ENCODE measurements at regions of chr4 and their contacts with region 1.

Region 1: GRCh38 chr4:40719008-40719623 is 30.6 kb upstream of the NSUN7 start:
- DNase-seq: peak; percentile 73
- ATAC-seq: peak; percentile 94
- H3K4me3 ChIP-seq: no peak overlapping the region
- H3K27ac ChIP-seq: no peak overlapping the region
- H3K4me1 ChIP-seq: peaks cover 15% of the 10 kb centered on the region
- H3K27me3 ChIP-seq: no peaks in the 10 kb centered on the region
- CTCF ChIP-seq: peak; percentile 80

Region 2: GRCh38 chr4:40325189-40326019 is 393.7 kb before region 1 on chr4:
- CTCF ChIA-PET with region 1: interaction called, 4 read pairs
- POLR2A ChIA-PET with region 1: no interaction called
- intact Hi-C with region 1: loop called (anchors 2 kb)
- DNase-seq: peak; percentile 72
- ATAC-seq: peak; percentile 84
- H3K4me3 ChIP-seq: no peak overlapping the region
- H3K27ac ChIP-seq: no peak overlapping the region
- H3K4me1 ChIP-seq: peaks cover 12% of the 10 kb centered on the region
- H3K27me3 ChIP-seq: no peaks in the 10 kb centered on the region
- CTCF ChIP-seq: peak; percentile 84

Region 3: DNA sequence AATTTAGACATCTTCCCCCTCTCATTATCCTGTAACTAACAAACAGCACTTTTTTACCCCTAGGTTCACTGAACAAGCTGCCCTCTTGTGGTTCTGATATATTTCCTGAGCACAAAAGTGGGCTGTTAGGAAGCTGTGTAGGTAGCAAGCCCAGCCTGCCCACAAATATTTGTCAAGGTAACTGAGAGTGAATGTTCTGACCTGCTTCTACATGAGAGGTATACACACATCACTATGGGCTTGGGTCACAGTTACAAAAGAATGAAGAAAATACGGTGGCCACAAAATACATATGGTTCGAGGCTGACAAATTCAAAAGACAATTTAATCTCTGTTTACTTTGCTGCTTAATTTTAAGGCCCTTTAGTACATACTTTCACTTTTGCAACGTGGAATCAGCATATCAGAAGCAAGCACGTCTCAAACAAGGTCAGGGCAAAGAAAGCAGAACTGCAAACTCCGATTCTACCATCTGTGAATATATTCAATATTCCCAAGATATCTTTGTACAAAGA is 168.1 kb before region 1 on chr4:
- CTCF ChIA-PET with region 1: no interaction called
- POLR2A ChIA-PET with region 1: interaction called, 3 read pairs
- intact Hi-C with region 1: loop called (anchors 5 kb)
- DNase-seq: peak; percentile 53
- ATAC-seq: peak; percentile 60
- H3K4me3 ChIP-seq: peak overlapping the region; percentile 35; the same call in 1 of the 2 replicates
- H3K27ac ChIP-seq: peak overlapping the region; percentile 56
- H3K4me1 ChIP-seq: peaks cover 21% of the 10 kb centered on the region
- H3K27me3 ChIP-seq: no peaks in the 10 kb centered on the region
- CTCF ChIP-seq: peak; percentile 59

Region 4: GRCh38 chr4:40629401-40630334 is 89.4 kb before region 1 on chr4 and contains the start of gene RBM47:
- CTCF ChIA-PET with region 1: no interaction called
- POLR2A ChIA-PET with region 1: no interaction called
- intact Hi-C with region 1: loop called (anchors 2 kb)
- DNase-seq: peak; percentile 86
- ATAC-seq: peak; percentile 78
- H3K4me3 ChIP-seq: peak within 1 kb of the TSS; percentile 87
- H3K27ac ChIP-seq: peak within 1 kb of the TSS; percentile 100
- H3K4me1 ChIP-seq: peaks cover 33% of the 10 kb centered on the region
- H3K27me3 ChIP-seq: no peaks in the 10 kb centered on the region
- CTCF ChIP-seq: no peak; the same call in 1 of the 2 replicates
- total RNA-seq, gene RBM47: 34.7 and 47.6 TPM in 2 replicates

Region 5: GRCh38 chr4:40856822-40857362 is 137.8 kb after region 1 on chr4:
- CTCF ChIA-PET with region 1: no interaction called
- POLR2A ChIA-PET with region 1: no interaction called
- intact Hi-C with region 1: no loop called
- DNase-seq: peak; percentile 51
- ATAC-seq: peak; percentile 92
- H3K4me3 ChIP-seq: peak overlapping the region; percentile 60; the same call in 1 of the 2 replicates
- H3K27ac ChIP-seq: no peak overlapping the region
- H3K4me1 ChIP-seq: no peaks in the 10 kb centered on the region
- H3K27me3 ChIP-seq: no peaks in the 10 kb centered on the region
- CTCF ChIP-seq: no peak

Measured in PC-3 (cell line).